Ascending aorta (tissue), 2 donors: ENCODE measurements at regions of chr12 and their contacts with region 1.

Region 1: DNA sequence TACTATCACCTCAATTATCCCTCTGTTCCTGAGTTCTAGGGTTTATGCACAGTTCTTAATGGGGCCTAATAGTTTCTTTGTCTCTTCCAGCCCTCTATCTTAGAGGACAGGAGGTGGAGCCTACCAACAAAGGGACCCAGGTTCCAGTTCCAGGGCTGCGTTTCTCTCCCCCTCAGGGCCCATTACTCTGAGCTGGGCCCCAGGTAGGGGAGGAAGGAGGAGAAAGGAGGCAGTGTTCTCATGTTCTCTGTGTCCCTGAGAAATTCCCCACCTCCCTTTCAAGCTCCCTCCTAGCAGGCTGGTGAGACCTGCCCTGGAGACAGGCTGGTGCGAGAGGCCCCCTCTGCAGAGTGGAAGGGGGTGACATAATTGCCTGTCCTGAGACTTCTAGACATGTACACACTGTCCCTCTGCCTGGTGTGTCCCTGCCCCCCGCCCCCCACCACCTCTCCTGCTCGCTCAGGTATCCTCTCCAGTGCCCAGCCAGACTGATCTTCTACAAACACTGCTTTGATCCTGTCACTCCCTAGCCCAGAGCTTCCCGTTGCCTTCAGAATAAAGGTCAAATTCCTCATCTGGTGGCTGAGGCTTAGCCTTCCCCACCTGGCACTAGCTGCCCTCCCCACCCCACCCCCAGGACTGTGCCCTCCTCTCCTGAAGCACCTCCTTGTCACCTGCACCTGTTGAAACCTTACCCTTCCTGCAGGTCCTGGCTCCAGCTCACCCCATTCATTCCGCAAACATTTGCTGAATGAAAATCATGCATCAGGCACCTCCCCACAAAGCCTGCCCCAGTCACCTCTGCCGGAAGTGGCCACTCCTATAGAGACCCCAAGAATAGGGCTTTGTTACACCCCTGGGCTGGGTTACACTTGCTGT is 21.1 kb upstream of the KRT8 start:
- DNase-seq: no peak
- H3K4me3 ChIP-seq: no peak overlapping the region
- H3K27ac ChIP-seq: peak overlapping the region in 1 of 2 donors; percentile 49
- H3K4me1 ChIP-seq: no peaks in the 10 kb centered on the region
- H3K27me3 ChIP-seq: no peaks in the 10 kb centered on the region
- CTCF ChIP-seq: no peak

Region 2: DNA sequence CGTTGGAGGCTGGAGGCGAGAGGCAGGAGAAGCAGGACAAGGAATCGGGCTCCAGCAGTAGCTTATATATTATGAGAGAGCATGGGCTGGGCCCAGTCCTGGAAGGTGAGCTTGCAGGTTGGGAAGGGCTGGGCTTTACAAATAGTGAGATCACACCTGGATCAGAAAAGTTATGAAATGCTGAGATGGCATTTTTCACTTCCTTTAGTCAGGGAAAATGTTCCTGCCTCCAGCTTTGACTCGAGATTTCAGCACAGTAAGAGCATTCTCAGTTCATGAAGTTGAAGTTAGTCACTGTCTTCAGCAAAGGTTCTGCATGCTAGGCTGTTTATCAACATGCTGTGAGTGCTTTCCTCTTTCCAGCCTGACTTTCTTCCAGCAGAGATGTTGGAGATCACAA is 452.2 kb before region 1 on chr12 and contains the start of gene KRT6C:
- intact Hi-C with region 1: no loop called
- DNase-seq: no peak
- H3K4me3 ChIP-seq: no peak within 1 kb of the TSS
- H3K27ac ChIP-seq: no peak within 1 kb of the TSS
- H3K4me1 ChIP-seq: no peaks in the 10 kb centered on the region
- H3K27me3 ChIP-seq: no peaks in the 10 kb centered on the region
- CTCF ChIP-seq: no peak
- total RNA-seq, gene KRT6C: not detected

Region 3: DNA sequence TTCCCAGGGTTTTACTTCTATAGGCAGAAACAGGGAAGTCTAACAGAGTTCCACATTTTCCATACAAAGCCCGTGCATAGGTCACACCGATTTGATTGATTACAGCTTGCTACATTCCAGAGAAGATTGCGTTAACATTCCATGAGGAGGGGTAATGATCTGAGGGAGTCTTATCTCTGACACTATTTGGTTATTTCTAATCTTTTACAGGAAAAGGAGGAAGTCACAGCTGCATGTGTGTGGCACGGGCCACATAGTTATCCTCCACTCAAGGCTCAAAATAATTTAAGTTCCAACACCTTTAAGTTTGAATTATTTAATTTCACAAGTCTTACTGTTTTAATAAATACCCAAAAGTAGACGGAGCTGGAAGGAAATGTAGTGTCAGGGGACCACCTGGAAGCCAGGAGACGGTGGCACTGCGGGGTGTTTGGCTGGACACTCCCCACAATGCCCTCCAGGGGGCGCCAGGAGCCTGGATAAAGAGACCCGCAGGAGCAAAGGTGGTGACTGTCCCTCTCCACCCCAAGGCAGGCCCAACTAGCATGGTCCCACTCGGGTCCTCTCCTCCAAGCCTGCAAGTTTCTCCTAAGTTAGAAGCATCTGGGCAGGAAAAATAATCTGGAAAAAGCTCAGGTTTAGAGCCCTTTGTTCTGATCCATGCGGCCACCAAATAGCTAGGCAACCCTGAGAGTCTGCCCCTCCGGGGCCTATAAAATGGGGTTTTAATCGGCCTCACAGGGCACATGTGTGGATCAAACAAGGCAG is 41.2 kb before region 1 on chr12:
- intact Hi-C with region 1: loop called (anchors 2 kb)
- DNase-seq: peak in 1 of 2 donors; percentile 82
- H3K4me3 ChIP-seq: no peak overlapping the region
- H3K27ac ChIP-seq: no peak overlapping the region
- H3K4me1 ChIP-seq: no peaks in the 10 kb centered on the region
- H3K27me3 ChIP-seq: no peaks in the 10 kb centered on the region
- CTCF ChIP-seq: peak; percentile 84 to 89 (median 88)

Region 4: GRCh38 chr12:52903285-52903854 is 22.6 kb before region 1 on chr12:
- intact Hi-C with region 1: loop called (anchors 2 kb)
- DNase-seq: peak; percentile 21 to 87
- H3K4me3 ChIP-seq: peak overlapping the region; percentile 71 to 73
- H3K27ac ChIP-seq: peak overlapping the region; percentile 68 to 83
- H3K4me1 ChIP-seq: peaks cover 0 to 10% of the 10 kb centered on the region in 2 donors
- H3K27me3 ChIP-seq: no peaks in the 10 kb centered on the region
- CTCF ChIP-seq: no peak